ENCODE measurements at regions of chr18 and their contacts with region 1.

Region 1: DNA sequence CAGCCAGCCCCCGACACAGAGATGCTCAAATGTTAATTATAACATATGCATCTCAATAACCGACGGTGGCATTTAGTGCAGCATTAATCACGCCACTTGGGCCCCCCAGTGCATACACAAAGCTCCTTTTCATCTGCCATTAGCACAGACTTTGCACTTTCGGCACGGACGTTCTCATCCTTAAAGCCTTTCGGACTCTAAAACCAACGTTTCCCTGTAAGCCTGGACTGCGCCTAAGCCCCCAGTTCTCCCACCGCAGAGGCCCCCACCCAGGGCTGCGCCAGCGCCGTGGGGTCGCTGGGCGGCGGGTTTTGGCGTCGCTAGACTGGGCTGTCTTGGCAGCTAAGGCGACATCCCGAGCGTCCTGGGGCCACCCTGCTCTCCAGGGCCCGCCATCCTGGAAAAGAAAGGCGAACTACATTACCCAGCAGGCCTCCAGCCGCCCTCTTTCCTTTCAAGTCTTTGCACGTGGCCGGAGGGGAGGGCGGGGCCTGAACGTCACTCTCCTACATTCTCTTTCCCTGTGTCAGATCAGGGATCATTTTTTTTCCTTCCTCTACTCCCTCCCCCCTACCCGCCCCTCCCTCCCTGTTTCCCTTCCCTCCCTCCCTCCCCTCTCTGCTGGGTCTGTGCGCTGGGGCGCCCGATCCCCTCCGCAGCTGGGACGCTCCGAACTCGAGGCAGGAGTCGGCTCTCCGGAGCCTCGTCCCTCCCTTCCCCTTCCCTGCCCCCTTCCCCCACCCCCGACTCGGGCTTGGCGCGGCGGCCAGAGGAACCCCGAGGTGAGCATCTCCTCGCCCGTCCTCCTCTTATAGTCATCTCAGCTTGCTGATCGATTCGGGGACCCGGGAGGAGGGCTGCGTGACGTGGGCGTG is at the start of gene CTIF:
- DNase-seq: peak; percentile 96
- H3K4me3 ChIP-seq: peak within 1 kb of the TSS; percentile 73 to 86 (median 80)
- H3K27ac ChIP-seq: peak within 1 kb of the TSS; percentile 86
- H3K4me1 ChIP-seq: peaks cover 33% of the 10 kb centered on the region
- H3K27me3 ChIP-seq: no peaks in the 10 kb centered on the region
- CTCF ChIP-seq: no peak
- POLR2A ChIP-seq: peak; percentile 87
- total RNA-seq, gene CTIF: 49.4 and 57.7 TPM in 2 replicates

Region 2: DNA sequence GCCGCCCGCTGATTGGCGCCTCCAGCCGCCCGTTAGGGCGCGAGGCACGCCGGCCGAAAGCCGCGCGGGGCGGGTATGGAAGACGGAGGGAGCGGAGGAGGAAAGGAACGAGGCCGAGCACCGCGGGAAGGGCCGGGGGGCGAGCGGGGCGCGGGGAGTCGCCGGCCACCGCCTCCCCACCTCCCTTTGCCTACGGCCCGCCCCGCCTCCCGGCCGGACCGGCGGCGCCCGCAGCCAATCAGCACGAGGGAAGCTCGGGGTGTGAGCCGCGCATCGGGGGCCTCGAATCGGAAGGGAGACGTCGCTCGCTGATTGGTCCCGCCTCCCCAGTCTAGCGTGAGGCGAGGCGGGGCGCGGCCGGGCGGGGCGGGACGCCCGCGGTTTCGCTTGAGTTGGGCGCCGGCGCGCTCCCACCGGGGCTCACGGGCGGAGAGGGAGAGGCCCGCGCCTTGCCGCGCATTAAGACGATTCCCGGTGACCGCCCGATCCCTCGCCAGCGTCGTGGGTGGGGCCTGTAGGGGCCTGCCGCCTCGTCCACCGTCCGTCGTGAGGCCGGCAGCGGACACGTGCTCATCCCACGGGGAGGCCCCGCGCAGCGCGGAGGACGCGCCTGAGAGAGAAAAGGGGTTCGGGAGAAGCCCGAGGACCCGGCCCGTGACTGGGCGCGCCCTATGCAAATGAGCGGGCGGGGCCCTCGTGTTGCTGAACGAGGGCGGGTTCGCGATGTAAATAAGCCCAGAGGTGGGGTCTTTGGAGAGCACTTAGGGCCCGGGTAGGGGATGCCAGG is 607.6 kb before region 1 on chr18:
- CTCF ChIA-PET with region 1: no interaction called
- POLR2A ChIA-PET with region 1: no interaction called
- dilution Hi-C with region 1: no loop called
- intact Hi-C with region 1: loop called (anchors 10 kb)
- DNase-seq: peak; percentile 93
- H3K4me3 ChIP-seq: peak overlapping the region; percentile 34 to 99 (median 49)
- H3K27ac ChIP-seq: peak overlapping the region; percentile 94
- H3K4me1 ChIP-seq: peaks cover 18% of the 10 kb centered on the region
- H3K27me3 ChIP-seq: peaks cover 9 to 15% of the 10 kb centered on the region in 2 experiments
- CTCF ChIP-seq: no peak
- POLR2A ChIP-seq: no peak

Region 3: DNA sequence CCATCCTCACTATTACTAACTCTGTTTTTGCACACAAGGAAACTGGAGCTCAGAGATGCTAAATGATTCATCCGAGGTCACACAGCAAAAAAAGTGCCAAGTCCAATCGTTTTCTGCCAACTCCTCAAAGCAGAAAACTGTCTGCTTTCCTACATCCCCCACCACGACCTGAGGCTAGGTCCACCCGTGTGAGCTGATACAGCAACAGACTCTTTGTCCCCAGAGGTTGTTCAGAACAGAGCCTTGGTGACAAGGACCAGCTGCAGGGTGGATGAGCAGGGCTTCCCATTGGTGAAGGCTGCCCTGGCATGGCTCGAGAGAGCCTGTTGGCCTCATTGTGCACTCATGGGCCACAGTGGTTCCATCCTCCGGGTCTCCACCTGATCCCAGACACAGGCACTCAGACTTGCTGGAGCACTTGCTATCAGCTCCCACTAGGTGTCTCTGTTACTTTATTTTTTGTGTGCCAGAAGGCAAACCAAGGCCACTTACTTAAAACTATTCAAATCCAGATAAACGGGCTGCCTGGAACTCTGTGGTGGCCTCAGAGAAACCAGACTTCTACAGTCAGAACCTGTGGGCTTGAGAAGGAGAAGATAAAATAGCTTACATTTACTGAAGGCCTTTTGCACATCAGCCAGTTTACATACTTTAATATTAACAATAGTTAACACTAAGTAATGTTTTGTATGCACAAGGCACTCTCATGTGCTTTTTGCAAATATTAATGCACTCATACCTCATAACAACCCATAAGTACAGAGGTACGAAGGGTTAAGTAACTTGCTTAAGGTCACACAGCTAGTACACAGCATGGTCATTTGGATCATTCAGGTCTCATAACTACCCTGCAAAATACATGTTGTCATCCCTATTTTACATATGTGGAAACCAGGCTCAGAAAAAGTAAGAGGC is 62.9 kb before region 1 on chr18:
- CTCF ChIA-PET with region 1: interaction called, 6 read pairs
- POLR2A ChIA-PET with region 1: no interaction called
- dilution Hi-C with region 1: no loop called
- intact Hi-C with region 1: loop called (anchors 1 kb)
- DNase-seq: peak; percentile 78
- H3K4me3 ChIP-seq: no peak overlapping the region
- H3K27ac ChIP-seq: no peak overlapping the region
- H3K4me1 ChIP-seq: peaks cover 2% of the 10 kb centered on the region
- H3K27me3 ChIP-seq: peaks cover 6 to 11% of the 10 kb centered on the region in 2 experiments
- CTCF ChIP-seq: peak; percentile 80 to 86
- POLR2A ChIP-seq: no peak

Region 4: DNA sequence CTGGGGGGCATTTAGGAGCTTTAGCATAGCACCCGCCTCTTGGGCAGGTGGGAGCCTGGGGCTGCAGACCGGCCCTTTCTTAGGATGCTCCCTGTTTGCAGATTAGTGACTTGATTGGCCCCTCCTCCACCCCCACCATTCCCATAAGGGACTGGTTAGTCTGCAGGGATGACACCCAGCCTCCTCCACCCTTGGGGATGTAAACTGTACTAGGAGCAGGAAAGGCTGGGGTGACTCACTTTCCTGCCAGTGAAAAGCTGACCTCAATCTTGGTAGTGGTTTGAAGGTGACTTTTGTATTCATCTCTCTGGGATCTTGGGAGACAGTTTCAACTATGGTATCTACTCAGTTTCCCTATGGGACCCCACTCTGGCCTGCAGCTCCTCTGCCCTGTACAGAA is 24.3 kb after region 1 on chr18:
- CTCF ChIA-PET with region 1: interaction called, 3 read pairs
- POLR2A ChIA-PET with region 1: interaction called, 4 read pairs
- dilution Hi-C with region 1: no loop called
- intact Hi-C with region 1: loop called (anchors 1 kb)
- DNase-seq: peak; percentile 79
- H3K4me3 ChIP-seq: no peak overlapping the region
- H3K27ac ChIP-seq: peak overlapping the region; percentile 45
- H3K4me1 ChIP-seq: peaks cover 39% of the 10 kb centered on the region
- H3K27me3 ChIP-seq: no peaks in the 10 kb centered on the region
- CTCF ChIP-seq: no peak
- POLR2A ChIP-seq: no peak

Region 5: GRCh38 chr18:48629730-48630324 is 91.1 kb after region 1 on chr18:
- CTCF ChIA-PET with region 1: no interaction called
- POLR2A ChIA-PET with region 1: no interaction called
- dilution Hi-C with region 1: no loop called
- intact Hi-C with region 1: loop called (anchors 5 kb)
- DNase-seq: peak; percentile 49
- H3K4me3 ChIP-seq: no peak overlapping the region
- H3K27ac ChIP-seq: peak overlapping the region; percentile 66
- H3K4me1 ChIP-seq: peaks cover 16% of the 10 kb centered on the region
- H3K27me3 ChIP-seq: no peaks in the 10 kb centered on the region
- CTCF ChIP-seq: no peak
- POLR2A ChIP-seq: no peak

Region 6: GRCh38 chr18:49459404-49460171 is 920.8 kb after region 1 on chr18:
- CTCF ChIA-PET with region 1: no interaction called
- POLR2A ChIA-PET with region 1: no interaction called
- dilution Hi-C with region 1: no loop called
- intact Hi-C with region 1: loop called (anchors 10 kb)
- DNase-seq: peak; percentile 8
- H3K4me3 ChIP-seq: peak overlapping the region; percentile 57 to 99 (median 87)
- H3K27ac ChIP-seq: peak overlapping the region; percentile 49
- H3K4me1 ChIP-seq: peaks cover 18% of the 10 kb centered on the region
- H3K27me3 ChIP-seq: no peaks in the 10 kb centered on the region
- CTCF ChIP-seq: no peak
- POLR2A ChIP-seq: no peak